Left ventricle myocardium superior (tissue), 1 donor: ENCODE measurements at regions of chr18 and their contacts with region 1.

Region 1: DNA sequence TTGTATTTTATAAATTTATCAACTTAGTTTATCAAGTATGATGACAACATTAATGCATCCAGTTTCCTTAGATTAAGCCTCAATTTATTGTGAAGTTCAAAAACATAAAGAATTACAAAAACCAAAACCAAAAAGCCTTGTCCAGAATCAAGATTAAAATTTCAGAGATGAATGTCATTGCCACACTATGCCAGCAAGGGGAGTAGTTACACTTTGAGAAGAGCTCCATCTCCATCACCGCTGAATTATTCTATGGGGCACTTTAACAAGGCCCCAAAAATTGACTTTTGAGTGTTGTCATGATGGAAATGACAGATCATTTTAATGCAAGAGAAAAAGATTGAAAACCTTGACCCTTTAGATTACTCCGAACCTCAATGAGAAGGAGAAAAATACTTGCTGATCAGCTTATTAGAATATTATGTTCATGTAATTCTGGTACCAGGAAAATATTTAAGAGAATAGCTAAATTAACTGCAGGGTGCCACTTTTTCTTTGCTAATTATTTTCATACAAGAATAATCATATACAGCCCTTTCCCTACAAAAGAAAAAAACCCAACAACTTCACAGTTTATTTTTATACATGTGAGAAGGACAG is 152.5 kb upstream of the AQP4 start:
- DNase-seq: no peak
- ATAC-seq: no peak

Region 2: DNA sequence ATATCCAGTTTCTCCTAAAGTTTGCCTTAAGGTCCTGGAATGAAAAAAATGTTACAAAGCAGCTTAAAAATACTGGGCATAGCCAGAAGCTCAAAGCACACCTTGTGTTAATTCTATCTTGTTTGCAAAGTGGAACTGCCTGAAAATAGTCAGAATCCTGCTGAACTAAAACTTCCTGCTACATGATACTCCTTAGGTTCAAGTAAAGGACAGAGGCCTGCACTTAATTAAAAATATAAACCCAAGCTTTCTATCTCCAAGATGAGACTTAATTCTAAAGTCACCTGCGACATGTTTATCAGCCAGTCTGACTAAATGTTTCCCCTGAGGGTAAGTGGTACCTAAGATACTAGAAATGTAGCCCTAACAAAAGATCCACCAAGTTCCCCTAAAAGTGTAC is 63.7 kb after region 1 on chr18:
- intact Hi-C with region 1: no loop called
- DNase-seq: no peak
- ATAC-seq: no peak

Region 3: DNA sequence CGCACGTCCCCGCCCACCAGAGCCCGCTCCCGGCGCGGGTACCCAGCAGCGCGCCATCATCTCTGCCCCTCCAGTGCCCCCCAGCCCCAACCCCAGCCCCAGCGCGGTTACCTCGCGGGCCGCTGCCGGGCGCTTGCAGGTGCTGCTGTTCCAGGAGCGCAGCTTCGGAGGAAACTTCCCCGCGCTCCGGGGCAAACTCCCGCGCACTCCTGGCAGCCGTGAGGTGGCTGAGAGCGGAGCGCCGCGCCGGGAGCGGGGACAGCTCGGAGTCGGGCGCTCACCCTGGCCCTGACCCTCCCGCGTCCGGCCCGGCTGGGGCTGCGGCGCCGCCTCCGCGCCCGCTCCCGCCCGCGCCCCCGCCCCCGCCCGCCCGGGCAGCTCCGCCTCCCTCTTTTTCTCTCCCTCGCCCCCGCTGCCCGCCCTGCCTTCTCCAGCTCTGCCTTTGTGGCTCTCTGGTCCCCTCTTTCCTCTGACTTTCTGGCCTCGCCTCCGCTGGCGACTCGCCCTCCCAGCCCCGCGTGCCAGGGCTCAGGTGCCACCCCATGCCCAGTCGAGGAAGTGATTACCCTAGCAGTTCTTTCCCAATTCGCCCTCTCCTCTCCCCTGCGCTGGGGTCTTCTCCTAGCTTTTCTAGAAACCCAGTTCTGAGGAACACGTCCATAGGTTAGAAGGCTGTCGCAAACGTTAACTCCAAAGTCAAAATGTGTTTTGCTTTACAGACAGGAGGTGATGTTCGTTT is 167.2 kb after region 1 on chr18 and contains the start of gene CHST9:
- intact Hi-C with region 1: loop called (anchors 5 kb)
- DNase-seq: peak; percentile 70
- ATAC-seq: peak; percentile 89
- total RNA-seq, gene CHST9: 7.0 TPM

Region 4: DNA sequence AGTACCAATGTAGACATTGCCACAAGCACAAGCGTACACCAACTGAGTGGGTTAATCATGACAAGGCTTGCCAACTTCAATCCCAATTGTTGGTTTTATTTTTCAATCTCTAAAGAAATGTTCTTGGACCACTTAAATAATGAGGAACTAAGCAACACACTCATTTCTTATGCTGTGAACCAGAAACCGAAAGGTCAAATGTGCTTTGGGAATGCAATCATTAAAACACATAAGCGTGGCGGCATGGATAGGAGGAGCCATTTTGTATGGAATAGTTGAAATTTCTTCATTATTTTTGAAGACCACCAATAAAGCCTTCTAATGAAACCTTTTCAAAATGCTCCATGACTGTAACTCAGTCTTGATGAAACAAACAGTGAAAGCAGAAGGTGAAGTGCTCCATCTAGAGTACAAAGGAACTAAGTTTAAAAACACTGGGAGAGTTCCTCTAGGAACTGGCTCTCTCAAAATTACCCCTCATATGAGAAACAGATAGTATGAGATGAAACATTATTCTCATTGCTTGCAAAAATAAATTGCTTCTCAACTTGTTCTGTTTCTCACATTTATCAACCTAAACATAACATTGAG is 280.3 kb after region 1 on chr18:
- intact Hi-C with region 1: loop called (anchors 2 kb)
- DNase-seq: no peak
- ATAC-seq: no peak

Region 5: GRCh38 chr18:27312153-27312552 is 294.2 kb after region 1 on chr18:
- intact Hi-C with region 1: no loop called
- DNase-seq: no peak
- ATAC-seq: no peak

Region 6: GRCh38 chr18:27605107-27605834 is 587.3 kb after region 1 on chr18:
- intact Hi-C with region 1: loop called (anchors 10 kb)
- DNase-seq: no peak
- ATAC-seq: peak; percentile 92